Mammary epithelial cell (primary cell): ENCODE measurements at regions of chr5 and their contacts with region 1.

Region 1: DNA sequence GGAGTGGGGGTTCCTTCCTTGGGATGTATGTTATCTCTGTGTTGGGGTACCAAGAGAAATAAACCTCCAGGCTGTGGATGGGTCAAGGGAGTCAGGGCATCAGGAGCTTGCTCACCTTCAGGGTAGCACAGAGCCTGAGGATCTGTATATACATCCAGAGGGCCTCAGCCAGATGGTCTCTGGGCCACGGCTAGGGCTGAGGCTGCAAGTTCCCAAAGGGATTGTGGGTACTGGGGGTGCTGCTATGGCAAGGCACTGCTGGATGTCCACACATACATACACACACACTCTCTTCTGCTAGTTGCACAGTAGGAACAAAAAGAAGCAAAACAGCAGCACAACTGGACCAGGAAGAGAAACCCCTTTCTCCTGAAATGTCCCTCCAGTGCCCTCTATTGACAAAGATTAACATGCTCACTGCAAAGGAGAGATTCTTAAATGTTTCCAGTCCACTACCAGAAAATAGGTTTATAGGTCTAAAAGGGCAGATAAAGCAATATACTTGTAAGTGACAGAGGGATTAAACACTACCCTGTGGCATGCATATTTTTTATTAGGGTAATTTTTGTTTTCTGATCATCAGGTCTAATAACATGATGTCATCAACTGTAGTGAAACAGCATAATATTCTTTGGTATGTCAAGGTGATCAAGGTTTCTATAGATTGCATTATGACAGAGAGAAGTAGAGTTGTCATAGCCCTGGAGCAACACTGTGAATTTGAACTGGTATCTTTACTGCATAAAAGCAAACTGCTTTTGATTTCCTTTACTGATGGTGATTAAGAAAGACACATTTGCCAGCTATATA is 56.3 kb upstream of the KCNN2 start:
- DNase-seq: peak; percentile 6
- H3K4me3 ChIP-seq: no peak overlapping the region
- H3K27ac ChIP-seq: no peak overlapping the region
- H3K4me1 ChIP-seq: no peaks in the 10 kb centered on the region
- H3K27me3 ChIP-seq: peaks cover under 1% of the 10 kb centered on the region
- CTCF ChIP-seq: peak; percentile 40 to 54

Region 2: GRCh38 chr5:114101153-114101552 is 204.5 kb before region 1 on chr5:
- CTCF ChIA-PET with region 1: no interaction called
- dilution Hi-C with region 1: no loop called
- in situ Hi-C with region 1: no loop called
- intact Hi-C with region 1: loop called (anchors 1 kb)
- DNase-seq: peak; percentile 17
- H3K4me3 ChIP-seq: no peak overlapping the region
- H3K27ac ChIP-seq: no peak overlapping the region
- H3K4me1 ChIP-seq: no peaks in the 10 kb centered on the region
- H3K27me3 ChIP-seq: no peaks in the 10 kb centered on the region
- CTCF ChIP-seq: peak; percentile 75 to 76